ENCODE measurements at regions of chr4 and their contacts with region 1.

Region 1: DNA sequence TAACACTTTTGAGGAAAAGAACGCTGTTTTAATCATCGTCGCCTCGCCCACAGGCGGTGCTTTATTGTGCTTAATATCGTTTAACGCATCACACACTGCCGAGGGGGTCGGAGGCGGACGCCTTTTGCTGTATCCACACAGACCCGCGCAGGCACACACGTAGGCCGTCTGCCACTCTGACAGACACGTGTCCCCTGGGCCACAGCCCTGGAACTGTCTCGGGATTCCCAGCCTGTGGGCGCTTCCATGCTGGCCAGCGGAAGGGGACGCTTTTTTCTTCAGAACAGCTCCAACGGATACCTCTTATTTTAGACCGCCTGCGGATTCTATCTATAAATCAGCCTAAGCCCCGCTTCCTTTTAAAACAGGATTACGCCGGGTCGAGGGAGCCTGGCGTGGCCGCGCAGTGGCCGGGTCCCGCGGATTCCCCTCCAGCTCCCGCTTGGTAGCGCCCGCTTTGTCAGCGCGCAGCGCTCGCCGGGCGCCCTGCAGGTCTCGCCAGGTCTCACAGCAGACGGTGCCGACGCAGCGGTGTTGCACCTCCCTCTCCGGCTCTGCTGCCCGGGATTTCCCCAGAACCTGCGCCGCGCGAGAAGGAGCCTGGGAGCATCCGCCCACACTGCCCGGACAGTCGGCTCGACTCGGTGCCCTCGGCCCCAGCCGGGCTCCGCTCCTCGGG is at the start of gene NOCT:
- DNase-seq: peak; percentile 89
- H3K4me3 Mint-ChIP-seq: peak within 1 kb of the TSS; percentile 89
- H3K27ac Mint-ChIP-seq: peak within 1 kb of the TSS; percentile 93
- H3K4me1 Mint-ChIP-seq: peaks cover 41% of the 10 kb centered on the region
- H3K27me3 Mint-ChIP-seq: no peaks in the 10 kb centered on the region
- total RNA-seq, gene NOCT: 20.3 and 22.1 TPM in 2 replicates

Region 2: GRCh38 chr4:138242076-138242833 is 773.2 kb before region 1 on chr4 and contains the start of gene SLC7A11:
- intact Hi-C with region 1: loop called (anchors 10 kb)
- DNase-seq: peak; percentile 74
- H3K4me3 Mint-ChIP-seq: peak within 1 kb of the TSS; percentile 90
- H3K27ac Mint-ChIP-seq: peak within 1 kb of the TSS; percentile 97
- H3K4me1 Mint-ChIP-seq: peaks cover 30% of the 10 kb centered on the region
- H3K27me3 Mint-ChIP-seq: no peaks in the 10 kb centered on the region
- total RNA-seq, gene SLC7A11: 0.92 and 1.8 TPM in 2 replicates

Region 3: GRCh38 chr4:139214039-139214534 is 198.7 kb after region 1 on chr4:
- intact Hi-C with region 1: no loop called
- DNase-seq: no peak
- H3K4me3 Mint-ChIP-seq: no peak overlapping the region
- H3K27ac Mint-ChIP-seq: no peak overlapping the region
- H3K4me1 Mint-ChIP-seq: no peaks in the 10 kb centered on the region
- H3K27me3 Mint-ChIP-seq: peaks cover 7% of the 10 kb centered on the region

Region 4: DNA sequence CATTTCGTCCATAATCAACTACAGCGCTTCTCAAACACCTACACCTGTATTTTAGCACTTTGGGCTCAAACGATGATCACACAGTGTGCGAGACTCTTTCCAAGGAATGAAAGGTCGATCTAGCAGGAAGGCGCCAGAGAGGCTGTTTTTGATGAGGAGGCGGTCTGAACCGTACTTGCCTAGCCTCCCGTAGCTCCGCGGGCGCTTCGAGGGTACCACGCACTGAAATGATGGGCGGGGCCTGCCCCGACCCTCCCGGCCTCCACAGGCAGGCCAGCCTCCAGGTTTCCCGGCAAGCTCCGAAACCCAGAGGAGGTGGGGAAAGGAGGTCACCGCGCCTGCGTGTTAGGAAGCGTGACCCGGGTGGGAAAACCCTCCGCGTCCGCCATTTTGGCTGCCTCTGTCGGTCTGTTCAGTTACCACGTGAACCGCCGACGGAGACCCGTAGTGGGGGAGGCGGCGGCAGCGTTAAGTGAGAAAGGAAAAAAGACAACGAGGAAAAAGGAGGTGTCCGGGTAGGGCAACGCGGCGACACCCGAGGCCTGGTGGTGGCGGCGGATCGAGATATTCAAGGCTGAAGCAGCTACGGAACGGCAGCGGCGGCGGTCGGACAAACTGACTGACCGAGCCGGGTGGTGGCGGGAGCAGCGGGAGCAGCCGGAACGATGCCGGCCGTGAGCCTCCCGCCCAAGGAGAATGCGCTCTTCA is 285.9 kb after region 1 on chr4 and contains the start of gene NAA15:
- intact Hi-C with region 1: loop called (anchors 2 kb)
- DNase-seq: peak; percentile 98
- H3K4me3 Mint-ChIP-seq: peak within 1 kb of the TSS; percentile 98
- H3K27ac Mint-ChIP-seq: peak within 1 kb of the TSS; percentile 99
- H3K4me1 Mint-ChIP-seq: peaks cover 48% of the 10 kb centered on the region
- H3K27me3 Mint-ChIP-seq: no peaks in the 10 kb centered on the region
- total RNA-seq, gene NAA15: 86.7 and 97.4 TPM in 2 replicates

Measured in activated T-helper 2 cell treated with anti-CD3 and anti-CD28 coated beads, Interferon-gamma antibody, Interleukin-2, Interleukin-4, amounts not matched to agents 10 μg/mL and 5 μg/mL and 100 μg/mL, durations not matched to agents 14 hours and 24 hours and 36 hours (primary cell).